Mammary epithelial cell (primary cell): ENCODE measurements at regions of chr20 and their contacts with region 1.

Region 1: GRCh38 chr20:4563534-4563933 is 158.2 kb upstream of the PRND start:
- DNase-seq: peak; percentile 68
- H3K4me3 ChIP-seq: no peak overlapping the region
- H3K27ac ChIP-seq: no peak overlapping the region
- H3K4me1 ChIP-seq: peaks cover 3% of the 10 kb centered on the region
- H3K27me3 ChIP-seq: no peaks in the 10 kb centered on the region
- CTCF ChIP-seq: peak; percentile 51

Region 2: GRCh38 chr20:4449957-4450715 is 113.4 kb before region 1 on chr20:
- CTCF ChIA-PET with region 1: no interaction called
- dilution Hi-C with region 1: no loop called
- in situ Hi-C with region 1: no loop called
- intact Hi-C with region 1: loop called (anchors 5 kb)
- DNase-seq: peak; percentile 72
- H3K4me3 ChIP-seq: peak overlapping the region in 1 of 3 experiments; percentile 2
- H3K27ac ChIP-seq: peak overlapping the region; percentile 9
- H3K4me1 ChIP-seq: peaks cover 40% of the 10 kb centered on the region
- H3K27me3 ChIP-seq: no peaks in the 10 kb centered on the region
- CTCF ChIP-seq: peak; percentile 41 to 49